ENCODE measurements at regions of chr9 and their contacts with region 1.

Region 1: GRCh38 chr9:136363606-136364370 is at the start of gene DNLZ:
- DNase-seq: peak; percentile 74 to 95 (median 84)
- ATAC-seq: peak; percentile 75
- H3K4me3 ChIP-seq: peak within 1 kb of the TSS; percentile 68
- H3K4me3 Mint-ChIP-seq: peak within 1 kb of the TSS; percentile 86
- H3K27ac ChIP-seq: peak within 1 kb of the TSS; percentile 67 to 74
- H3K27ac Mint-ChIP-seq: peak within 1 kb of the TSS; percentile 62
- H3K4me1 ChIP-seq: peaks cover 19% of the 10 kb centered on the region
- H3K4me1 Mint-ChIP-seq: peaks cover 5% of the 10 kb centered on the region
- H3K27me3 ChIP-seq: no peaks in the 10 kb centered on the region
- H3K27me3 Mint-ChIP-seq: no peaks in the 10 kb centered on the region
- CTCF ChIP-seq: peak; percentile 96
- total RNA-seq, gene DNLZ: 15.4 to 17.0 TPM

Region 2: GRCh38 chr9:136118320-136119060 is 245.3 kb before region 1 on chr9 and contains the start of gene TMEM250:
- CTCF ChIA-PET with region 1: no interaction called
- POLR2A ChIA-PET with region 1: no interaction called
- intact Hi-C with region 1: loop called in 1 of 2 experiments (anchors 5 kb)
- DNase-seq: peak; percentile 93 to 99 (median 96)
- ATAC-seq: peak; percentile 93
- H3K4me3 ChIP-seq: peak within 1 kb of the TSS; percentile 54
- H3K4me3 Mint-ChIP-seq: peak within 1 kb of the TSS; percentile 89
- H3K27ac ChIP-seq: peak within 1 kb of the TSS; percentile 76 to 79
- H3K27ac Mint-ChIP-seq: peak within 1 kb of the TSS; percentile 79
- H3K4me1 ChIP-seq: peaks cover 62% of the 10 kb centered on the region
- H3K4me1 Mint-ChIP-seq: peaks cover 22% of the 10 kb centered on the region
- H3K27me3 ChIP-seq: no peaks in the 10 kb centered on the region
- H3K27me3 Mint-ChIP-seq: no peaks in the 10 kb centered on the region
- CTCF ChIP-seq: no peak
- total RNA-seq, gene TMEM250: 6.5 to 7.9 TPM

Region 3: DNA sequence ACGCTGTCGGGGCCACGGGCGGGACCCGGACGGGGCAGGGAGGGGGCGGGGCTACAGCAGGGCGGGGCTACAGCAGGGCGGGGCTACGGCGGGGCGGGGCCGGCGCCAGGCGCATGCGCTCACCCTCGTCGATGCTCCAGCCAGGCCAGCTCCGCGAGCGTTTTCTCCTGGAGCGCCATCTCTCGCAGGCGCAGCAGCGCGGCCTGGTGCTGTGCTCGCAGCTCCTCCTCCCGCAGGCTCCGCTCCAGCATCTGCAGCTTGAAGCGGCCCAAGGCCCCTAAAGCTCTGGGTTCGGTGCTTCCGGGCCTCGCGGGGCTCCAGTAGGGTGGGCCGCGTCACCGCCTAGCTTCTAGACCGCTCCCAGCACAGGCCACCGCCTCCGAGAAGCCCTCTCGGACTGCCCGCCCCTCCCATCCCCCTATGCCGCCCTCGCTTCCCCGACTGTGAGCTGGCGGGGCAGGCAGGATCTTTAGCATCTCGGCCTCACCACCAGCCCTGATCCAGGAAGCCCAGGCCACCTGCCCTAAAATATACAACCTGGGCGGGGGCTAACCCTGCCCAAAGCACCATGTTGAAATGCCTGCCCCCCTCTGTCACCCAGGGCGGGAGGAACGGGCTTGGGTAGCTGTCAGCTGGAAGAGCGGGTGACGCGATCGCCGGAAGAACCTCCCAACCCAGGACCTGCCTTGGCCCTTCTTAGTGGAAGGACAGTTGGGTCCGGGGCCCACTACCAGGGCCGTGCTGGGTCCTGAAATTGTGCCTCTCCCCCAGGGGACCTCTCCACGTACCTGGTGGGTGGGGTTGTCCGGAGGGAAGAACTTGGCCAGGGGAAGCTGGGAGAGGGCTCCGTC is 96.3 kb before region 1 on chr9:
- CTCF ChIA-PET with region 1: no interaction called
- POLR2A ChIA-PET with region 1: interaction called, 15 read pairs
- intact Hi-C with region 1: loop called in 1 of 2 experiments (anchors 2 kb)
- DNase-seq: peak; percentile 78 to 94 (median 84)
- ATAC-seq: peak; percentile 98
- H3K4me3 ChIP-seq: peak overlapping the region; percentile 76
- H3K4me3 Mint-ChIP-seq: peak overlapping the region; percentile 79
- H3K27ac ChIP-seq: peak overlapping the region in 1 of 2 donors; percentile 55
- H3K27ac Mint-ChIP-seq: peak overlapping the region; percentile 75
- H3K4me1 ChIP-seq: peaks cover 15% of the 10 kb centered on the region
- H3K4me1 Mint-ChIP-seq: peaks cover 4% of the 10 kb centered on the region
- H3K27me3 ChIP-seq: no peaks in the 10 kb centered on the region
- H3K27me3 Mint-ChIP-seq: no peaks in the 10 kb centered on the region
- CTCF ChIP-seq: peak; percentile 28

Region 4: DNA sequence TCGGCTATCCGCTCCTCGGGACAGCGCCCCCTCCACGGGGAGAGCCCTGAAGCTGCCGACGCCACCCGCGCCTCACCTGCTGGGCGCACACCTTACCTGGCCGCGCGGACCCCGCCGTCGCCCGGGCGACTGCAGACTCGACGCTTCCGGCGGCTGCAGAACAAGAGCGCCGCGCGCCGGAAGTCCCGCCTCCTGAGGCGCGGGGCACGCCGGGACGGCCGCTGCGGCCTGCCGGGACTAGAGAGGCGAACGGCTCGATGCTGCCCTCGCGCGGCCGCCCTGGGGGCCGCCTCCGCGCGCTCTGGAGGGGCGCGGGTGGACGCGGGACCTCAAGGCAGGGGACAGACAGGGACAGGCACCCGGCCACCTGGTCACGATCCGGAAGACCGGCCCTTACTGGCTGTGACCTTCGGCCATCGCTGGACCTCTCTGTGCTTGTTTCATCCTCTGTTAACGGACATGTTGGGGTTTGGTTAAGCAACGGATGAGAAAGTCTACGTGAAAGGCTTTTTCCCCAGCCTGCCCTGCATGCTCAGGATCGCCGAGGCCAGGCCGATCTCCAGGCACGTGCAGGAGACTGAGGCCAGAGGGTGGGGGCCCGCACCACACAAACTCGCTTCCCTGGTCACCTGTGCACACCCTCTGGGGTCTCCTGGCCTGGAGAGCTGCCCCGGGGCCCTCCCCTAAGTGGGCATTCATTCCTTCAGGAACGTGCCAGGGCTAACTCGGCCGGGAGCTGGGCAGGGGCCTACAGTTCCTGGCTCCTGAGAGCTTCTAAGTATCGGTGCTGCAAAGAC is 36.4 kb after region 1 on chr9 and contains the start of gene SNAPC4:
- CTCF ChIA-PET with region 1: interaction called, 18 read pairs
- POLR2A ChIA-PET with region 1: interaction called, 9 read pairs
- intact Hi-C with region 1: loop called in 1 of 2 experiments (anchors 1 kb)
- DNase-seq: peak; percentile 75 to 95 (median 86)
- ATAC-seq: peak; percentile 66
- H3K4me3 ChIP-seq: peak within 1 kb of the TSS; percentile 72
- H3K4me3 Mint-ChIP-seq: peak within 1 kb of the TSS; percentile 88
- H3K27ac ChIP-seq: no peak within 1 kb of the TSS
- H3K27ac Mint-ChIP-seq: peak within 1 kb of the TSS; percentile 55
- H3K4me1 ChIP-seq: peaks cover 59% of the 10 kb centered on the region
- H3K4me1 Mint-ChIP-seq: peaks cover 41% of the 10 kb centered on the region
- H3K27me3 ChIP-seq: no peaks in the 10 kb centered on the region
- H3K27me3 Mint-ChIP-seq: no peaks in the 10 kb centered on the region
- CTCF ChIP-seq: peak; percentile 87
- total RNA-seq, gene SNAPC4: 7.7 to 8.0 TPM

Region 5: GRCh38 chr9:136439550-136440408 is 76.0 kb after region 1 on chr9 and contains the start of gene INPP5E:
- CTCF ChIA-PET with region 1: interaction called, 3 read pairs
- POLR2A ChIA-PET with region 1: no interaction called
- intact Hi-C with region 1: loop called in 1 of 2 experiments (anchors 2 kb)
- DNase-seq: peak; percentile 65 to 91 (median 82)
- ATAC-seq: peak; percentile 78
- H3K4me3 ChIP-seq: peak within 1 kb of the TSS; percentile 71
- H3K4me3 Mint-ChIP-seq: peak within 1 kb of the TSS; percentile 97
- H3K27ac ChIP-seq: peak within 1 kb of the TSS in 1 of 2 donors; percentile 29
- H3K27ac Mint-ChIP-seq: peak within 1 kb of the TSS; percentile 92
- H3K4me1 ChIP-seq: peaks cover 35% of the 10 kb centered on the region
- H3K4me1 Mint-ChIP-seq: peaks cover 21% of the 10 kb centered on the region
- H3K27me3 ChIP-seq: no peaks in the 10 kb centered on the region
- H3K27me3 Mint-ChIP-seq: no peaks in the 10 kb centered on the region
- CTCF ChIP-seq: peak; percentile 50
- total RNA-seq, gene INPP5E: 17.2 to 19.4 TPM

Region 6: GRCh38 chr9:136885950-136886578 is 522.3 kb after region 1 on chr9 and contains the start of gene TRAF2:
- CTCF ChIA-PET with region 1: no interaction called
- POLR2A ChIA-PET with region 1: no interaction called
- intact Hi-C with region 1: loop called in 1 of 2 experiments (anchors 5 kb)
- DNase-seq: peak; percentile 92 to 99 (median 96)
- ATAC-seq: peak; percentile 92
- H3K4me3 ChIP-seq: peak within 1 kb of the TSS; percentile 85
- H3K4me3 Mint-ChIP-seq: peak within 1 kb of the TSS; percentile 88
- H3K27ac ChIP-seq: peak within 1 kb of the TSS; percentile 81 to 95
- H3K27ac Mint-ChIP-seq: peak within 1 kb of the TSS; percentile 92
- H3K4me1 ChIP-seq: peaks cover 68% of the 10 kb centered on the region
- H3K4me1 Mint-ChIP-seq: peaks cover 26% of the 10 kb centered on the region
- H3K27me3 ChIP-seq: no peaks in the 10 kb centered on the region
- H3K27me3 Mint-ChIP-seq: no peaks in the 10 kb centered on the region
- CTCF ChIP-seq: no peak
- total RNA-seq, gene TRAF2: 10.6 to 11.6 TPM

Measured in CD4-positive, alpha-beta T cell (primary cell).